Dorsolateral prefrontal cortex (tissue), 120 donors: ENCODE measurements at regions of chr4 and their contacts with region 1.

Region 1: DNA sequence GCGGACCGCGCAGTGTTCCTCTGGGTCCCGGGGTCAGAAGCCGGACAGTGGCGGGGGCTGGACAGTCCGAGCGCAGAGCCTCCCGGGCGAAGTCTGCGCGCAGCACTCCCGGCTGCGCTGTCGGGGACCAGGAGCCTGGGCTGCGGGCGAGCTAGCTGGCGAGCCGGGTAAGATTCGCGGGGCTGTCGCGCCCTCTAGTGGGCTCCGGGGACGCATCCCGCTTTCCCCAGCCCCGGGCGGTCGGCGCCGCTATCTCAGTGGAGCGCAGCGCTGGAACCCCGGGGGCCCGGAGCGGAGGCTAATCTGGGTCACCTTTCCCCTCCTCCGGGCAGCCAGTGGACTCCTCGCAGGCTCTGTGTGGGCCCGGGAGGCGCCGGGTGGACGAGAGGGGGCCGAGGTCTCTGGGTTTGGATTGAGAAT is 4.2 kb downstream of the PDGFRA start:
- DNase-seq: peak; percentile 54 to 90 (median 78)
- H3K4me3 ChIP-seq: peak overlapping the region; percentile 33 to 74 (median 58)
- H3K27ac ChIP-seq: peak overlapping the region in 35 of 59 donors; percentile 2 to 73 (median 49)
- H3K27me3 ChIP-seq: peaks cover 4 to 76% (median 47%) of the 10 kb centered on the region in 45 donors
- CTCF ChIP-seq: peak; percentile 71 to 94 (median 84)

Region 2: GRCh38 chr4:52234561-52235440 is 1998.5 kb before region 1 on chr4:
- intact Hi-C with region 1: loop called in 1 of 2 experiments (anchors 10 kb)
- DNase-seq: no peak
- H3K4me3 ChIP-seq: no peak overlapping the region
- H3K27ac ChIP-seq: no peak overlapping the region
- H3K27me3 ChIP-seq: peaks cover 0 to 14% (median 0%) of the 10 kb centered on the region in 45 donors
- CTCF ChIP-seq: peak; percentile 22 to 79 (median 56)

Region 3: GRCh38 chr4:53015681-53016080 is 1217.6 kb before region 1 on chr4:
- intact Hi-C with region 1: loop called (anchors 5 to 10 kb)
- DNase-seq: peak in 2 of 10 donors; percentile 9 to 28
- H3K4me3 ChIP-seq: no peak overlapping the region
- H3K27ac ChIP-seq: no peak overlapping the region
- H3K27me3 ChIP-seq: no peaks in the 10 kb centered on the region
- CTCF ChIP-seq: peak; percentile 26 to 76 (median 62)

Region 4: DNA sequence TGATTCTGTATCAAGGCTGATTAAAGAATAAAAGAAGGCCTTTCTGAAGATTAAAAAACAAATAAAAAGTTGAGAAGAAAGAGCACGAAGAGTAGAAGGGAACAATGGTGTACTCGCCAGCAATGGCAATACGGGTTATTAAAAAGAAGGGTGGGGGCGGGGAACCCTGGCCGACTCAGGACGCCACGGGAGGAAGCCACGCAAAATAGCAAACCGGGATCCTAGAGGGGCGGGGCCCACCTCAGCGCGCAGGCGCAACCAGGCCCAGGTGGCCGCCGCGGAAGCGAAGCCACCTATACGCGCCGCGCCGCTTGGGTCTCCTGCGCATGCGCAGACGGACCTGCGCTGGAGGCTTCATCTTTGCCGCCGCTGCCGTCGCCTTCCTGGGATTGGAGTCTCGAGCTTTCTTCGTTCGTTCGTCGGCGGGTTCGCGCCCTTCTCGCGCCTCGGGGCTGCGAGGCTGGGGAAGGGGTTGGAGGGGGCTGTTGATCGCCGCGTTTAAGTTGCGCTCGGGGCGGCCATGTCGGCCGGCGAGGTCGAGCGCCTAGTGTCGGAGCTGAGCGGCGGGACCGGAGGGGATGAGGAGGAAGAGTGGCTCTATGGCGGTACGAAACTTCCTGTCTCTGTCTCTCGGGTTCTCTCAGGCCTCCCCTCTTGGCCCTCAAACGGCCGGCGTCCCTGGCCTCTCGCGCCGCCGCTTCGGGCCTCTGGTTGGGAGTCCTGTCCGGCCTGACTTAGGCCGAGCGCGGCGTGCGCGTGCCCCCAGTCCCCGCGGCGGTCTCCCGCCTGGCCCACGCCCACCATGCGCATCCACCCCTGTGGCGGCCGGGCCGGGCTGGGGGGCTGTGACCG is 855.7 kb before region 1 on chr4 and contains the start of gene FIP1L1:
- intact Hi-C with region 1: loop called in 1 of 2 experiments (anchors 10 kb)
- DNase-seq: peak; percentile 85 to 93 (median 89)
- H3K4me3 ChIP-seq: peak within 1 kb of the TSS; percentile 60 to 99 (median 90)
- H3K27ac ChIP-seq: peak within 1 kb of the TSS in 57 of 59 donors; percentile 30 to 93 (median 80)
- H3K27me3 ChIP-seq: peaks cover 0 to 2% (median 0%) of the 10 kb centered on the region in 45 donors
- CTCF ChIP-seq: peak in 35 of 56 donors; percentile 9 to 50 (median 32)
- total RNA-seq, gene FIP1L1: 48.3 to 86.9 (median 66.4) TPM

Region 5: GRCh38 chr4:53908661-53909078 is 324.6 kb before region 1 on chr4:
- intact Hi-C with region 1: loop called in 1 of 2 experiments (anchors 5 kb)
- DNase-seq: peak in 3 of 10 donors; percentile 8 to 42 (median 36)
- H3K4me3 ChIP-seq: peak overlapping the region in 54 of 59 donors; percentile 0 to 61 (median 34)
- H3K27ac ChIP-seq: no peak overlapping the region
- H3K27me3 ChIP-seq: peaks cover 0 to 40% (median 4%) of the 10 kb centered on the region in 45 donors
- CTCF ChIP-seq: peak; percentile 42 to 81 (median 70)

Region 6: GRCh38 chr4:54064295-54065111 is 168.8 kb before region 1 on chr4 and contains the start of gene CHIC2:
- intact Hi-C with region 1: loop called in 1 of 2 experiments (anchors 10 kb)
- DNase-seq: peak; percentile 79 to 95 (median 92)
- H3K4me3 ChIP-seq: peak within 1 kb of the TSS; percentile 56 to 99 (median 94)
- H3K27ac ChIP-seq: peak within 1 kb of the TSS in 58 of 59 donors; percentile 56 to 94 (median 85)
- H3K27me3 ChIP-seq: no peaks in the 10 kb centered on the region
- CTCF ChIP-seq: peak in 7 of 56 donors; percentile 8 to 31 (median 20)
- total RNA-seq, gene CHIC2: 10.0 to 28.8 (median 19.4) TPM